Common myeloid progenitor, CD34-positive (primary cell): ENCODE measurements at regions of chr17 and their contacts with region 1.

Region 1: DNA sequence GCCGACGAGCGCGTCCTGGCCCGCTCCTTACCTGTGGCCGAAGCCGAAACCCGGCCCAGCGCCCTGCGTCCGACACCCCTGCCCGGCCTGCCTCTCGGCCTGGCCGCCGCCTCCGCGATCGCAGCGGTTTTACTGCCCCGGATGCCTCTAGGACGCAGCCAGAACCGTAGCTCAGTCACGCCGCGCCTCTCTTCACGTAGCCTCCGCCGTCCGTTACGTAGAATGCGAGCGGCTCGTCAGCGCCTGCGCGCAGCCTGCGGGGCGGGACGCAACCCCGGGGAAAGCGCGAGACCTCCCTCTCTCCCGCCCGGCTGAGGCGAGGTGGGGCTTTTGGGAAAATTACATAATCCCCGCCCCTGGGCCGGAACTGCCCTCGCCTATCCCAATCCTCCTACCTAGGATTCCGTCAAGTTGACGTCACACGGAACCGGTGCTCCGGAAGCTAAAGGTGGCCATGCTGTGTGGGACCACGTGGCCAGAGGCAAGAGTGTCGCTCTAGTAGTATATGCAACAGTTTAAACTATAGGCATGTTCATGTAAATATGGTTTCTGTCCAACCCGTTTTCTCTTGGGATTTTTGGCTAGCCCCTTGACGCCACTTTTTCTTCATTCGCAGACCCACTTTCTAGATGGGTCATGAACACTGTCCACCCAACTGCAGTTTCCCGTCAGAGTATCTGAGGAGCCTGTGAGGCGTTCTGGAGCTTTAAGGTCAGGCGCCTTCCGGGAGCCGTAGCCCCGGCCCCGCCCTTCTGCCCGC is at the start of gene CCDC47:
- DNase-seq: peak; percentile 99 to 100 (median 100)
- H3K4me3 ChIP-seq: peak within 1 kb of the TSS; percentile 84 to 99 (median 98)
- H3K27ac ChIP-seq: peak within 1 kb of the TSS; percentile 96 to 98
- H3K4me1 ChIP-seq: peaks cover 21 to 36% (median 25%) of the 10 kb centered on the region in 4 experiments
- H3K27me3 ChIP-seq: no peaks in the 10 kb centered on the region

Region 2: DNA sequence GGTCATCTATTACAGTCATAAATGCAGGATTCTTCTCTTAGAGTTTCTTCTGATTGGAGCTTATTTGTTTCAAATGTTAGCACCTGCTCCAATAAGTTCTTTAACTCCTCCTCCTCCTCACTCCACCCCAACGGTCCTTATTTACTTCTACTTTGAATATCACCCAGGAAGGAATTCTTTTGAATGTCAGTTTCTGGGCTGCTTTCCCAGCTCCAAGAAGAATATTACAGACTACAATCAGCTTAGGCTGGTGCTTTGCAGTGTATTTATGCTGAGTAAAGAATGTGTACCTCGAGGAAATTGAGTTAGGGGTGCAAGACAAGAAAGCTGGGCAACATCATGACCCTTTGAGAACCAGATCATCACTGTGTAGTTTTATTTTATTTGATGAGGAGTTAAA is 120.5 kb before region 1 on chr17:
- CTCF ChIA-PET with region 1: no interaction called
- POLR2A ChIA-PET with region 1: no interaction called
- DNase-seq: no peak
- H3K4me3 ChIP-seq: no peak overlapping the region
- H3K27ac ChIP-seq: no peak overlapping the region
- H3K4me1 ChIP-seq: peaks cover 3 to 9% (median 6%) of the 10 kb centered on the region in 4 experiments
- H3K27me3 ChIP-seq: no peaks in the 10 kb centered on the region

Region 3: DNA sequence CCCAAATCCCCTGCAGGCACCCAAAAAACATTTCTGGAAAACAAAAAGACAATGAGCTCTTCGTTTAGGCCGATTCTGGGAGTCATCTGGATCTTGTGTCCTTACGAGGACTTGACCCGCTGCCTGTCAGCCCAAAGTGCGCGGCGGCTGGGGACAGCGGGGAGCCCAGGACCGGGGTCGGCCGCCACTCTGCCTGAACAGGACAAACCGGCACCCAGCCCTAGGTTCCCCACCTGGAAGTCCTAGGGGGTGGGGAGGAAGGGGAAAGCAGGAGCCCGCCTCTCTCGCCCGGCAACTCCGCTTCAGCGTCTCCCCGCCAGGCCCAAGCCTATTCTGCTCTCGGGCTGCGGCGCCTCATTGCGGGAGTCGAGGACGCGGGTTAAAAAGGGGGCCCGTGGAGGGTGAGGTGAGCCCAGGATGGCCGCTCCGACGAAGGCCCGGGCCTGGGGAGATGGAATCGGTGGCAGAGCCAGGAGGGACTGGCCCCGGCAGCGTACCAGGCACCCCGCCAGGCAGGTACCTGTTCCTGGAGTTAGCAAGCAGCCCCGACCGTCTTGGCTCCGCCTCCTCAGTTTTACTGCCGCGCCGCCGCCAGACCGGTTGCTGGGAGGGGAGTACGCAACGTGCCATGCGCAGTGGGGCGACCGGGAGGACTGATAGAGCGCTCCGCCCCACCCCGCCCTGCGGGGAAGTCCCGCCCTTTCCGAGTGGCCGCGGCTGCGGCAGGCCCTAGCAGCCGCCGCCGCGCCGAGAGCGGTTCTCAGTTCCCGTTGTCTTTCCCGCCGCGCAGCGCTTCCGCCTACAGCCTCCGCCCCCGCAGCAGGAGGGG is 32.1 kb before region 1 on chr17 and contains the start of gene STRADA:
- CTCF ChIA-PET with region 1: interaction called, 4 read pairs
- POLR2A ChIA-PET with region 1: interaction called, 16 read pairs
- DNase-seq: peak; percentile 98 to 99 (median 99)
- H3K4me3 ChIP-seq: peak within 1 kb of the TSS; percentile 80 to 95 (median 87)
- H3K27ac ChIP-seq: peak within 1 kb of the TSS; percentile 80 to 93
- H3K4me1 ChIP-seq: peaks cover 5 to 19% (median 18%) of the 10 kb centered on the region in 4 experiments
- H3K27me3 ChIP-seq: no peaks in the 10 kb centered on the region

Region 4: DNA sequence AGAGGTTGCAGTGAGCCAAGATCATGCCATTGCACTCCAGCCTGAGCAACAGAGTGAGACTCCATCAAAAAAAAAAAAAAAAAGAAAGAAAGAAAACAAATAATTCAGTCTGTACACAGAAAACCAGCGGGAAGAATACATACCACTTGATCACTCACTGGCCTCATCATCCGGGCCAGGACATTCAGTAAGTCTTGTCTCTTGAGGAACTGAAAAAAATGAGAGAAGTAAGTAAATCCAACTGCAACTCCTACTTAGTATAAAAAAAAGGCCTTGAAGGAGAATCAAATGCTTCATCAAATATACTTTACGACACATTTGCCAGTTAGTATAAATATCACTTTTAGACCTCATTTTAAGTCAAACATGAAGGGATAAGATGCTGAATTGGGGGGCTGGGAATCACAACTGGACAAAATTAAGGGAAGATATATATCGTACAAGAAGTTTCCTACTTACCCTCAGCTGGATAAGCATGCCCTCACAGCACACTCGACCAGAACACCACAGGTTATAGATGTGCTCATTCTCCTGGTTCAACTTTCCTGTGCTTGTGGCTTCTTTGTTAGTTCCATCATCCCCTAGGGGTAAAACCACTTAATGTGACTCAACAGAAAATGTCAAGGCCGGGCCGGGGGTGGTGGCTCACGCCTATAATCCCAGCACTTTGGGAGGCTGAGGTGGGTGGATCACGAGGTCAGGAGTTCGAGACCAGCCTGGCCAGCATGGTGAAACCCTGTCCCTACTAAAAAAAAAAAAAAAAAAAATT is 12.6 kb before region 1 on chr17:
- CTCF ChIA-PET with region 1: interaction called, 4 read pairs
- POLR2A ChIA-PET with region 1: interaction called, 11 read pairs
- DNase-seq: peak in 2 of 3 donors; percentile 48 to 54
- H3K4me3 ChIP-seq: no peak overlapping the region
- H3K27ac ChIP-seq: no peak overlapping the region
- H3K4me1 ChIP-seq: peaks cover 13 to 25% (median 18%) of the 10 kb centered on the region in 4 experiments
- H3K27me3 ChIP-seq: no peaks in the 10 kb centered on the region

Region 5: GRCh38 chr17:63809970-63810369 is 36.4 kb after region 1 on chr17:
- CTCF ChIA-PET with region 1: no interaction called
- POLR2A ChIA-PET with region 1: no interaction called
- DNase-seq: no peak
- H3K4me3 ChIP-seq: no peak overlapping the region
- H3K27ac ChIP-seq: no peak overlapping the region
- H3K4me1 ChIP-seq: no peaks in the 10 kb centered on the region
- H3K27me3 ChIP-seq: no peaks in the 10 kb centered on the region